CD8-positive, alpha-beta T cell (primary cell): ENCODE measurements at regions of chr22 and their contacts with region 1.

Region 1: DNA sequence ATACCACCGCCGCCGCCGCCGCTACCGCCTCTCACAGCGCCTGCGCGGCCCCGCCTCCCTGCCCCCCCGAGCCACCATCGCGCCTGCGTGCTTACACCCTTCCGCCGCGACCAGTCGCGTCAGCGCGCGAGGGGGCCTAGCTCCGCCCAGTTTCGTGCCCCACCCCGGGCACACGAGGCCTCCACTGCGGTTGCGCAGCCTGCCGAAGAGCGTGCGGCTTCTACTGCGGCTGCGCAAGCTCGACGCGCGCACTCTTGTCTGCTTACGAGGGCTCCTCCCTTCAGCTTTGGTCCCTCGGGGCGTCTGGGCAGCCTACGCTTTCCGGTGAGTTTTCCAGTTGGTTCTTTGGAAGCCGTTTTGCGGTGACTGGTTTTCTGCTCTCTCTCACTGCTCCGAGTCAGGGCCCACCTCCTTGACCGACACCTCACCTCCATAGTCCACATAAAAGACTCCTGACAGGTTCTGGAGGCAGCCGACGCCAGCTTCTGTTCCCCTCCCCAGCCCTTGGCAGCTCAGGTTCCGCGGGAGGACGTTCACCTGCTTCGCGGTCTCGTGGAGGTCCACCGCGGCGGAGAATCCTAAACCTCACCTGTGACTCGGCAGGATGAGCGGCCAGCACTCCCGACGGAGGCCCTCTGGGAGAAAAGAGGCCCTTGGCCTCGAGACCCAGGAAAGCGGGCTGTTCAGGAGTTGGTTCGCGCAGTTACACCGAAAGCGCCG is at the start of gene PITPNB:
- DNase-seq: peak; percentile 98 to 100 (median 99)
- ATAC-seq: peak; percentile 89
- H3K4me3 ChIP-seq: peak within 1 kb of the TSS; percentile 66 to 82
- H3K4me3 Mint-ChIP-seq: peak within 1 kb of the TSS; percentile 98
- H3K27ac ChIP-seq: peak within 1 kb of the TSS; percentile 87 to 98
- H3K27ac Mint-ChIP-seq: peak within 1 kb of the TSS; percentile 99
- H3K4me1 ChIP-seq: peaks cover 25% of the 10 kb centered on the region
- H3K4me1 Mint-ChIP-seq: peaks cover 68% of the 10 kb centered on the region
- H3K27me3 ChIP-seq: no peaks in the 10 kb centered on the region
- H3K27me3 Mint-ChIP-seq: no peaks in the 10 kb centered on the region
- CTCF ChIP-seq: no peak
- total RNA-seq, gene PITPNB: 40.8 to 41.5 TPM

Region 2: GRCh38 chr22:26483439-26484359 is 1435.7 kb before region 1 on chr22 and contains the starts of genes HPS4 and SRRD:
- CTCF ChIA-PET with region 1: no interaction called
- POLR2A ChIA-PET with region 1: no interaction called
- intact Hi-C with region 1: loop called in 1 of 2 experiments (anchors 10 kb)
- DNase-seq: peak; percentile 87 to 97 (median 93)
- ATAC-seq: peak; percentile 83
- H3K4me3 ChIP-seq: peak within 1 kb of the TSS; percentile 78 to 97
- H3K4me3 Mint-ChIP-seq: peak within 1 kb of the TSS; percentile 95
- H3K27ac ChIP-seq: peak within 1 kb of the TSS; percentile 85 to 94
- H3K27ac Mint-ChIP-seq: peak within 1 kb of the TSS; percentile 99
- H3K4me1 ChIP-seq: peaks cover 53% of the 10 kb centered on the region
- H3K4me1 Mint-ChIP-seq: peaks cover 69% of the 10 kb centered on the region
- H3K27me3 ChIP-seq: no peaks in the 10 kb centered on the region
- H3K27me3 Mint-ChIP-seq: no peaks in the 10 kb centered on the region
- CTCF ChIP-seq: no peak
- total RNA-seq, gene HPS4: 67.0 to 71.0 TPM
- total RNA-seq, gene SRRD: 22.1 to 24.1 TPM

Region 3: GRCh38 chr22:27885977-27886842 is 33.2 kb before region 1 on chr22:
- CTCF ChIA-PET with region 1: interaction called, 6 read pairs
- POLR2A ChIA-PET with region 1: interaction called, 4 read pairs
- intact Hi-C with region 1: loop called in 1 of 2 experiments (anchors 2 kb)
- DNase-seq: peak in 8 of 9 experiments; percentile 20 to 61 (median 50)
- ATAC-seq: peak; percentile 71
- H3K4me3 ChIP-seq: no peak overlapping the region
- H3K4me3 Mint-ChIP-seq: no peak overlapping the region
- H3K27ac ChIP-seq: no peak overlapping the region
- H3K27ac Mint-ChIP-seq: peak overlapping the region; percentile 10
- H3K4me1 ChIP-seq: no peaks in the 10 kb centered on the region
- H3K4me1 Mint-ChIP-seq: no peaks in the 10 kb centered on the region
- H3K27me3 ChIP-seq: no peaks in the 10 kb centered on the region
- H3K27me3 Mint-ChIP-seq: no peaks in the 10 kb centered on the region
- CTCF ChIP-seq: peak; percentile 98

Region 4: DNA sequence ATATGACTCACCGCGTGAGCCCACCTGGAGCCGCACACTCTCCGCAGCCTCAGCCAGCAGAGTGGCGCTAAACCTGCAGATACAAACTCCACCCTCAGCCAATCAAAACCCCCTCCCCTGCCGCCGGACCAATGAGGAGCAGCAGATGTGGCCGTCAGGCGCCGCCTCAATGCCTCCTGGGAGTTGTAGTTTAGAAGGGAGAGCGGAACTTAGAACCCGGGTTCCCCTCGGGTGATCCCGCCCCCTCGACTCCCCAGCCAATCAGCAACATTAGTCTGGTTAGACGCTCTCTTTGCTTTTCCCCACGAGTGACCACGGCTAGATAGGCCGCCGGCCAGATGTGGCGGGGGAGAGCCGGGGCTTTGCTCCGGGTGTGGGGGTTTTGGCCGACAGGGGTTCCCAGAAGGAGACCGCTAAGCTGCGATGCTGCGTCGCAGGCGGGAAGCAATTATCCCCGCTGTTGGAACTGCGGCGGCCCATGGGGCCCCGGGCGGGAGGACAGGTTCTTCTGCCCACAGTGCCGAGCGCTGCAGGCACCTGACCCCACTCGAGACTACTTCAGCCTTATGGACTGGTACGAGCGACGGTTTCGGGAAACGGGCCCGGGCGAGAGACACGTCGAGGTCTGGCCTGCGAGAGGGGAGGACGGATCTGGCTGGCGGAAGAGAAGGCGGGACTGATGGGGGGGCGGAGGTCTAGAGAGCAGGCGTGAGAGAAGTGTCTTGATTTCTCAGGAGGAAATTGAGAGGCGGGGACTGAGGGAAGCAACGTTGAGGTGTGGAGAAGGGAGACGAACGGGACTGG is 822.6 kb after region 1 on chr22 and contains the starts of genes CHEK2 and HSCB:
- CTCF ChIA-PET with region 1: no interaction called
- POLR2A ChIA-PET with region 1: no interaction called
- intact Hi-C with region 1: loop called in 1 of 2 experiments (anchors 2 kb)
- DNase-seq: peak; percentile 94 to 99 (median 96)
- ATAC-seq: peak; percentile 94
- H3K4me3 ChIP-seq: peak within 1 kb of the TSS; percentile 85 to 98
- H3K4me3 Mint-ChIP-seq: peak within 1 kb of the TSS; percentile 88
- H3K27ac ChIP-seq: peak within 1 kb of the TSS; percentile 82 to 94
- H3K27ac Mint-ChIP-seq: peak within 1 kb of the TSS; percentile 92
- H3K4me1 ChIP-seq: peaks cover 13% of the 10 kb centered on the region
- H3K4me1 Mint-ChIP-seq: peaks cover 22% of the 10 kb centered on the region
- H3K27me3 ChIP-seq: no peaks in the 10 kb centered on the region
- H3K27me3 Mint-ChIP-seq: no peaks in the 10 kb centered on the region
- CTCF ChIP-seq: no peak
- total RNA-seq, gene CHEK2: 2.1 to 3.6 TPM
- total RNA-seq, gene HSCB: 4.8 to 5.9 TPM

Region 5: DNA sequence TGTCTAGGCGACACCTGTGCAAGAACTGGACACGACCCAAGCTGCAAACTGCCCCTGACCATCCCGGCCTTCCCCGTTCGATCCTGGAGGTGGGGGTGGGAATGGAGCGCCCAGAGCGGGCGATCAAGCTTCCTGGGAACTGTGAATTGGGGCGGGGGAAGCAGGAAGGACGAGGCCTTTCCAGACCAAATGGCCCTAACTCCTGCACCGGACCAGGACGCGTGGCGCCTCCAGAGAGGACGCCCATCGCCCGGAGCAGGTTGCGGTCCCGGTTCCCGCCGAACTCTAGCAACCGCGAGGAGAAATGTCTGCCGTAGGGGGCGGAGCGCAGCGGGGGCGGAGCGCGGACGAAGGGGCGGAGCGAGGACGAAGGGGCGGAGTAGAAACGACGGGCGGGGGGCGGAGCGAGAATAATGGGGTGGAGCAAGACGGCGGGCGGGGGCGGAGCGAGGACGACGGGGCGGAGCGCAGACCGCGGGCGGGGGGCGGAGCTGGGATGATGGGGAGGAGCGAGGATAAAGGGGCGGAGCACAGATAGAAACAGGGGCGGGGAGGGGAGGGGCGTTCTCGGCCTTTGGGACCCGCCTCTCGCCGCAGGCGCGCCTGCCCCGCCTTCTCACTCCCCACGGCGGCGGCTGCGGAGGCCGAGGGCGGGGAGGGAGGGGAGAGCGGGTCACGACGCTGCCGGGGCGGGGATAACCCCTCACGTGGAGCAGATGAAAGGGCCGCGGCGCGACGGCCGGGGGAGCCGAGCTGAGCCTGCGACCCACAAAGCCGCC is 963.7 kb after region 1 on chr22 and contains the start of gene ZNRF3:
- CTCF ChIA-PET with region 1: no interaction called
- POLR2A ChIA-PET with region 1: no interaction called
- intact Hi-C with region 1: loop called (anchors 5 kb)
- DNase-seq: peak; percentile 79 to 95 (median 92)
- ATAC-seq: peak; percentile 94
- H3K4me3 ChIP-seq: peak within 1 kb of the TSS; percentile 52 to 77
- H3K4me3 Mint-ChIP-seq: peak within 1 kb of the TSS; percentile 87
- H3K27ac ChIP-seq: no peak within 1 kb of the TSS
- H3K27ac Mint-ChIP-seq: no peak within 1 kb of the TSS
- H3K4me1 ChIP-seq: peaks cover 13% of the 10 kb centered on the region
- H3K4me1 Mint-ChIP-seq: peaks cover 23% of the 10 kb centered on the region
- H3K27me3 ChIP-seq: peaks cover 5 to 9% of the 10 kb centered on the region in 2 experiments
- H3K27me3 Mint-ChIP-seq: peaks cover 27% of the 10 kb centered on the region
- CTCF ChIP-seq: no peak
- total RNA-seq, gene ZNRF3: 0.49 to 0.69 TPM